ENCODE measurements at regions of chr12 and their contacts with region 1.

Region 1: DNA sequence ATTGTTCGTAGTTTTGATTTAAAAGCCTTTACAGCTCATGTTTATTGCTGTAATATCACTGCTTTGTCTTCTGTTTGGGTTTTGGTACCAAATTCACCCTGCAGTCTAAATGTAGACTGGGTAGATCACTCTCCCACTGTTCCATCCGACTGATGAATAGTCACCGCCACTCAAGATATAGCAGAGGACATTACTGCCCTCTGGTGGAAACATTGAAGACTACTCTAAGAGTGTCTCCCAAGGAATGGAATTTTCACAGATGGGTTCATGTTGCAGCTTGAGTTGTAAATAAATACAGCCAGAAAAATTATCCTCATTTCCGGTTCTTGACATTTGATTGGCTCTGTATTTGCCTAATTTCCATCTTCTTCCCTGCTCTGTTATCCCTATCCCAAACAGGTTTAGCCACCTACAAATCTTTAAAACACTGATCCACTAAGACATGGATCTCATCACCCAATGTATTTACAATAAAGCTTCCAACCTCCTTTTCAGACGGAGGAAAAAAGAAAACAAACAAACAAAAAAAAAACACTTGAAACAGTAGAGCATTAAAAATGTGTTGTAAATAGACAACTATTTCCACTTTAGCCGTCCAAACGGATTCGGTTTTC is 198.3 kb upstream of the CPNE8 start:
- DNase-seq: peak; percentile 6
- H3K4me3 Mint-ChIP-seq: no peak overlapping the region
- H3K27ac Mint-ChIP-seq: no peak overlapping the region
- H3K4me1 Mint-ChIP-seq: no peaks in the 10 kb centered on the region
- H3K27me3 Mint-ChIP-seq: peaks cover 4% of the 10 kb centered on the region

Region 2: DNA sequence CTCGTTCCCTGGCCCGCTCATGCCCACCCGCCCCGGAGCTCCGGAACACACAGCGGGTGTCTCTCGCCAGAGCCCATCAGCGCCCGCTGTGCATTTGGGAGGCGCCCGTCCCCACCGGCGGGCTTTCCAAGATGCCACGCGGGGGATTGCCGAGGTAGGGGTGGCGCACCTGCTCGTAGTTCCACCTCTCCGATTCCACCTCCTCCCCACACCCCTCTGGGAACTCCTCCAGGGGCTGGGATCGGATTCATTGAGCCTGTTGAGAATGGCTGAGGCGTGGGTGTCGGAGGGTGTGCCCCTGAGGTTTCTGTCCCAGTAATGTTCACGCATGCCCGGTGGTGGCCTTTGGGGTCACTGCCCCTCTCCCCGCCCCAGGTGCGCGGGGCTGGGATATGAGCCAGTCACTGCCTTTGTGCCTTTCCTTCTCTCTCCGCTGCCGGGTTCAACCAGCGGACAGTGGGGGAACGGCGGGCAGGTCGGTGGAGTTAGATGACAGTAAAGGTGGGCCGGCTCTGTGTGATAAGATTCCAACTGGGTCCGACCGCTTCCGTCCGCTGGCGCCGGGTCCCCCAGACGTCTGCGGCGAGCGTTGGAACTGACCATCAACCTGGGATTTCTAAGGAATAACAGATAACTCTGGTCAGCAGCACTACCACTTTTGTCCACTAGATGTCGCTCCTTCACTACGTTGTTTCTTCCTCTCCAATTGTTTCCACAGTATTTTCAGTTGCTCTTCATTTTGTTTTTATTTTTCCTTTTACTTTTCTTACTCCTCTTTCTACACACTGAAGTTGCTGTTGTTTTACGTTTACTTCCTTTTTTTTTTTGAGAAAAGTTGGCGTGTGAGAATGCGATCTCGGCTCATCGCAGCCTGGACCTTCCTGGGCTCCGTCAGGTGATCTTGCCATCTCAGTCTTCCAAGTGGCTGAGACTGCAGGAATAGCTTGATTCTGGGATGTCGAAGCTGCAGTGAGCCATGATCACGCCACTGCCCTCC is 965.1 kb before region 1 on chr12:
- intact Hi-C with region 1: loop called (anchors 1 kb)
- DNase-seq: peak; percentile 30
- H3K4me3 Mint-ChIP-seq: peak overlapping the region; percentile 83
- H3K27ac Mint-ChIP-seq: no peak overlapping the region
- H3K4me1 Mint-ChIP-seq: no peaks in the 10 kb centered on the region
- H3K27me3 Mint-ChIP-seq: peaks cover 5% of the 10 kb centered on the region

Region 3: GRCh38 chr12:38332814-38333213 is 770.8 kb before region 1 on chr12:
- intact Hi-C with region 1: loop called (anchors 1 kb)
- DNase-seq: no peak
- H3K4me3 Mint-ChIP-seq: no peak overlapping the region
- H3K27ac Mint-ChIP-seq: no peak overlapping the region
- H3K4me1 Mint-ChIP-seq: no peaks in the 10 kb centered on the region
- H3K27me3 Mint-ChIP-seq: no peaks in the 10 kb centered on the region

Region 4: GRCh38 chr12:38664661-38665269 is 438.9 kb before region 1 on chr12:
- intact Hi-C with region 1: loop called (anchors 1 kb)
- DNase-seq: no peak
- H3K4me3 Mint-ChIP-seq: no peak overlapping the region
- H3K27ac Mint-ChIP-seq: no peak overlapping the region
- H3K4me1 Mint-ChIP-seq: no peaks in the 10 kb centered on the region
- H3K27me3 Mint-ChIP-seq: no peaks in the 10 kb centered on the region

Region 5: GRCh38 chr12:38921025-38921677 is 182.5 kb before region 1 on chr12:
- intact Hi-C with region 1: loop called (anchors 1 kb)
- DNase-seq: no peak
- H3K4me3 Mint-ChIP-seq: no peak overlapping the region
- H3K27ac Mint-ChIP-seq: no peak overlapping the region
- H3K4me1 Mint-ChIP-seq: no peaks in the 10 kb centered on the region
- H3K27me3 Mint-ChIP-seq: peaks cover 2% of the 10 kb centered on the region

Region 6: DNA sequence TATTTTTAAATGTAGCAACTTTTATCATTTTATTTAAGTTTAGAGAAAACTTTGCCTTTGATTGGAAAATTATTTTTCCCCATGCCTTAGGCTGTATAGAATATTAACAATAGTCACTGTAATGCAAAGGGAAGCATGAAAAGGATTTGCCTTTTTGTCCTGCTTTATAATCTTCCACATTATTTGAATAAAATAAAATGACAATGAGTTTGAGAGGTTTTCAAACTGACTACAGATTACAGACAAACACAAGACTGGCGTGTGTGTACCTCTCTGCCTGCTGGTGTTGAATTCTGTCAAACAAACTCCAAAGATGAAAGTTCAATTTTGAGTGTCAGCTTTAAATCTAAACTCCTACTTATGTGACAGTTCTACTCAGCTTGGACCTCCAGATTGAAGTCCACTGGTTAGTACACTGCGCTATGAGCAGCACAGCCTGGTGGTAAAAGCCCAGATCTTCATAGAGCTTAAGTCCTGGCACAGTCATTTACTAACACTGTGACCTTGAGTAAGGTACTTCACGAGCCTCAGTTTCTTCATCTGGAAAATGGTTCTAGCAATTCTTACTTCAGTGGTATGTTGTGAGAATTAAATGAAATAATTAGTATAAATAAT is 100.0 kb before region 1 on chr12:
- intact Hi-C with region 1: no loop called
- DNase-seq: no peak
- H3K4me3 Mint-ChIP-seq: no peak overlapping the region
- H3K27ac Mint-ChIP-seq: no peak overlapping the region
- H3K4me1 Mint-ChIP-seq: no peaks in the 10 kb centered on the region
- H3K27me3 Mint-ChIP-seq: no peaks in the 10 kb centered on the region

Region 7: GRCh38 chr12:39138268-39138667 is 34.6 kb after region 1 on chr12:
- intact Hi-C with region 1: no loop called
- DNase-seq: no peak
- H3K4me3 Mint-ChIP-seq: no peak overlapping the region
- H3K27ac Mint-ChIP-seq: no peak overlapping the region
- H3K4me1 Mint-ChIP-seq: no peaks in the 10 kb centered on the region
- H3K27me3 Mint-ChIP-seq: peaks cover 3% of the 10 kb centered on the region